OCI-LY7 (cell line): ENCODE measurements at regions of chr1 and their contacts with region 1.

Region 1: DNA sequence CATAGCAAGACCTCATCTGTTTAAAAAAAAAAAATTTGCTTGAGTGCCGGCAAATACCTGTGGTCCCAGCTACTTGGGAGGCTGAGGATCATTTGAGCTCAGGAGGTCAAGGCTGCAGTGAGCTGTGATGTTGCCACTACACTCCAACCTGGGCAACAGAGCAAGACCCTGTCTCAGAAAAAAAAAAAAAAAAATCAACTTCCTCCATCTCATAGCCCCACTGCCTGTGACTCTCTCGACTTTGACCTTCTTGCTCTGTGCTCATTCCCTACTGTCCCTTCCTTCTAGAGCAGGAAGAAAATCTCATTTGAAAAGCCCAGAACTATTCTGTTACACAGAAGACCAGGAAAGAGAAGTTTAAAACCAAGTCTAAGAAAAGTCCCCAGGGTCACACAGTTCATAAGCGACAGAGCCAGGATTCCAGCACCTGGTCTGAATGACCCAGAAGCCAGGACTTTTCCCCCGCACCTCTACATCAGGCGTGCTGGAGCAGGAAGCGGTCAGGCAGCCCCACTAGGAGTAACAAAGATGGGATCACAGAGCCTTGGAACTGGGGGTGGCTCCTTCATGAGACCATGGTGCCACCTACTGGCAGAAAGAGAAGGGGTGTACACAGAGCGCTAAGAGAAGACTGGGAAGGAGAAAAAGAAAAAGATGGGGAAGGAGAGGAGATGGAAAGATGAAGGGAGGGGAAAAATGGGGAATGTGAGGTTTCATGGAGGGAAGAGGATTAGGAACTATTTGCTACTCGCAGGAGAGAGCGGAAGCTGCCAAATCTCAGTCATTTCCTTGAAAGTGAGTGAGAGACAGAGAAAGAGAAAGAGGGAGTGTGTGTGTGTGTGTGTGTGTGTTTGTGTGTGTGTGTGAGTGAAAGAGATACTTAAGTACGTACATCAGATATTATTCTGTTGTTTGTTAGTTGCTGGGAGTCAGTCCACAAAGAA is 3.1 kb upstream of the P3R3URF start:
- DNase-seq: peak; percentile 84
- H3K4me3 ChIP-seq: no peak overlapping the region
- H3K27ac ChIP-seq: no peak overlapping the region
- H3K4me1 ChIP-seq: peaks cover 51% of the 10 kb centered on the region
- CTCF ChIP-seq: peak; percentile 100

Region 2: GRCh38 chr1:45750298-45751038 is 428.9 kb before region 1 on chr1 and contains the start of gene IPP:
- CTCF ChIA-PET with region 1: no interaction called
- POLR2A ChIA-PET with region 1: no interaction called
- intact Hi-C with region 1: loop called (anchors 1 kb)
- DNase-seq: peak; percentile 98
- H3K4me3 ChIP-seq: peak within 1 kb of the TSS; percentile 73
- H3K27ac ChIP-seq: peak within 1 kb of the TSS; percentile 81
- H3K4me1 ChIP-seq: peaks cover 13% of the 10 kb centered on the region
- CTCF ChIP-seq: peak; percentile 39; the same call in 1 of the 2 replicates
- total RNA-seq, gene IPP: 4.6 and 6.3 TPM in 2 replicates

Region 3: DNA sequence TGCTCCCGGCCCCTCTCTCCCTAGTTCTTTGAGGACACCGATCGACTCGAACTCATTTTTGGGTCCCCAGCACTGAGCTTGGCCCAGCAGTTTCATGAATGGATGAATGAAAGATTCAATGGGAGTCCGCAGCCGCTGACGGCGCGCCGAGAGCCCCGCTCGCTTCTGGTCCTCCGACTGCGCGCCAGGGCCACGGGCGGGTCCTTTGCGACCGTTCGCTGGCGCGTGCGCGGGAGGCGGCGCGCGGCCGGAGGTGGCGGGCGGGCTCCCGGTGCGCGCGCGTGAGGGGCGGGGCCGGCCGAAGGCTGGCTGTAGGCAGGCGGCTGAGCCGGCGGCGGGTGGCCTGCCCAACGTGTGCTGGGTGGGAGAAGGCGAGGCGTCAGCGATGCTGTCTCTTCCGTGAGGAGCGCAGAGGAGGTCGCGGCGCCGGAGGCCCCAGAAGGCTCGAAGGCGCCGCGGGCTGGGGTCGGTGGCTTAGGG is 376.1 kb before region 1 on chr1 and contains the start of gene MAST2:
- CTCF ChIA-PET with region 1: no interaction called
- POLR2A ChIA-PET with region 1: no interaction called
- intact Hi-C with region 1: loop called (anchors 2 kb)
- DNase-seq: peak; percentile 94
- H3K4me3 ChIP-seq: peak within 1 kb of the TSS; percentile 84
- H3K27ac ChIP-seq: peak within 1 kb of the TSS; percentile 53
- H3K4me1 ChIP-seq: peaks cover 21% of the 10 kb centered on the region
- CTCF ChIP-seq: no peak
- total RNA-seq, gene MAST2: 25.5 and 32.1 TPM in 2 replicates

Region 4: DNA sequence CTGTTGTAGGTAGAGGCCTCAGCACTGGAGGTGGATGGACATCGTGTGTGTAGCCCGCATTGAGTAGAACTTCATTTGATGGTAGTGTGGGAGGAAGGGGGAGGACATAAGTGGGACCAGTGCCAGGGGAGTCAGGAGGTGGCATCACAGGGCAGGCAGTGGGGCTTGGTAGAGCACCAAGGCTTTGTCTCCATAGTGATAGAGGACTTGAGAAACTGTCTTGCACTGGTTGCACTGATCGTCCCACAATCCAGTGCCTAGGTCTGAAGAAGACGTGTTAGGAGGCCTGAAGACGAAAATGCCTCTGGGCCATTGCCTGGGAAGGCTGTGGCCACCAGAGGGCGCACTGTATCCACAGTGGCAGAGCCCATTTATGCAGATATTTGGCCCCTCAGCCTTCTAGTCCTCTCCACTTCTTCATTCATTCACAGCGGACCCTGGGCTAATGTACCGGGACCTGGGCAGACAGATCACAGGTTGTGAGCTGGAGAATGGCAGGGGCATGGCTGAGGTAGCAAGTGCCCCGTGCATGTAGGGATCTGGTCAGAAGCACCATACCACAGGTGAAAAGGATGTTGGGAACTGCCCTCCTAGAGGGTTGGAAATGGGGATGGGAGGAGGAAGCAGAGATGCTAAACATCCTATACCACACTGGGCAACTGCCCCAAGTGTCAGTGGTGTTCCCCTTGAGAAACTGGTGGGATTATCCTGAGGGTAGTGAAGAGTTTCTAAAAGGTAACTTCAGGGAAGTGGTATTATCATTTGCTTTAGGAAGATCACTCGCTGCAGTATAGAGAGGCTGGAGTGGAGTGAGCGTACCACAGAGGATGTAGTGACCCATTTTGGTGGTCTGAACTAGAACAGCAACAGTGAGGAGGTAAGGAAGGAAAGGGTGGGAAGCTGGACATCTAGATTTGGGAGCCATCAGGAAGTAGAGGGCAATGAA is 142.2 kb before region 1 on chr1:
- CTCF ChIA-PET with region 1: interaction called, 4 read pairs
- POLR2A ChIA-PET with region 1: interaction called, 9 read pairs
- intact Hi-C with region 1: loop called (anchors 1 kb)
- DNase-seq: peak; percentile 90
- H3K4me3 ChIP-seq: no peak overlapping the region
- H3K27ac ChIP-seq: peak overlapping the region; percentile 7
- H3K4me1 ChIP-seq: peaks cover 55% of the 10 kb centered on the region
- CTCF ChIP-seq: peak; percentile 97

Region 5: GRCh38 chr1:46094474-46095005 is 84.9 kb before region 1 on chr1:
- CTCF ChIA-PET with region 1: no interaction called
- POLR2A ChIA-PET with region 1: no interaction called
- intact Hi-C with region 1: no loop called
- DNase-seq: no peak
- H3K4me3 ChIP-seq: no peak overlapping the region
- H3K27ac ChIP-seq: no peak overlapping the region
- H3K4me1 ChIP-seq: peaks cover 21% of the 10 kb centered on the region
- CTCF ChIP-seq: no peak

Region 6: GRCh38 chr1:46425726-46426125 is 246.3 kb after region 1 on chr1:
- CTCF ChIA-PET with region 1: no interaction called
- POLR2A ChIA-PET with region 1: no interaction called
- intact Hi-C with region 1: no loop called
- DNase-seq: no peak
- H3K4me3 ChIP-seq: no peak overlapping the region
- H3K27ac ChIP-seq: no peak overlapping the region
- H3K4me1 ChIP-seq: no peaks in the 10 kb centered on the region
- CTCF ChIP-seq: no peak